Activated CD4-positive, alpha-beta T cell treated with anti-CD3 and anti-CD28 coated beads for 36 hours (primary cell): ENCODE measurements at regions of chr15 and their contacts with region 1.

Region 1: GRCh38 chr15:43510200-43511011 is 7.0 kb upstream of the MAP1A start:
- DNase-seq: peak; percentile 98
- ATAC-seq: peak; percentile 95
- H3K4me3 Mint-ChIP-seq: peak overlapping the region; percentile 91
- H3K27ac Mint-ChIP-seq: peak overlapping the region; percentile 90
- H3K4me1 Mint-ChIP-seq: peaks cover 32% of the 10 kb centered on the region
- H3K27me3 Mint-ChIP-seq: no peaks in the 10 kb centered on the region

Region 2: DNA sequence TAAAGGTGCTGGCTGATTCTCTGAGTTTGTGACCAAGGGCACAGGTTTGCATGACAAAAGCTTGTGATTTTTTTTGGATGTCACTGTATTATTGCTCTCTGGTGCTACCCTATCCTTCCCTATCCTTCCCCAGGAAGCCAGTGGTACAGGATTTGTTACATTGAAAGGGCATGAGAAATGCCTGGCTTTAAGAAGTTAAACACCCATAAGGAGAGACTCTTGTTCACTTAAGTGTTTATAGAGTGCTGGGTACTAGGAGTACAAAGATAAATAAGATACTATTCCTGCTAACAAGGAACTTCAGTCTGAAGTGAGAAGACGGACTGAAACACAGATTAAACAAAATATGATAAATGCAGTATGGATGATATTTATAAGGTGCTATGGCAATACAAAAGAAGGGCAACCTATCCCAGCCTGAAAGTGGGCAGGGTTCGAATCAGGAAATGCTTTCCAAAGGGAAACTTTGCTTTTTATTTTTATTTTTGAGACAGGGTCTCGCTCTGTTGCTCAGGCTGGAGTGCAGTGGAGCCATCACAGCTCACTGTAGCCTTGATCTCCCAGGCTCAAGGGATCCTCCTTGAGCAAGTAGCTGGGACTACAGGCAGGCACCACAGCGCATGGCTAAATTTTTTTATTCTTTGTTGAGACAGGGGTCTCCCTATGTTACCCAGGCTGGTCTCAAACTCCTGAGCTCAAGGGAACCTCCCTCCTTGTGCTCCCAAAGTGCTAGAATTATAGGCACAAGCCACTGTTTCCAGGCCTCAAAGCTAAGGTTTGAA is 191.2 kb before region 1 on chr15:
- CTCF ChIA-PET with region 1: no interaction called
- POLR2A ChIA-PET with region 1: no interaction called
- intact Hi-C with region 1: no loop called
- DNase-seq: no peak
- ATAC-seq: no peak
- H3K4me3 Mint-ChIP-seq: no peak overlapping the region
- H3K27ac Mint-ChIP-seq: no peak overlapping the region
- H3K4me1 Mint-ChIP-seq: no peaks in the 10 kb centered on the region
- H3K27me3 Mint-ChIP-seq: peaks cover 12% of the 10 kb centered on the region

Region 3: DNA sequence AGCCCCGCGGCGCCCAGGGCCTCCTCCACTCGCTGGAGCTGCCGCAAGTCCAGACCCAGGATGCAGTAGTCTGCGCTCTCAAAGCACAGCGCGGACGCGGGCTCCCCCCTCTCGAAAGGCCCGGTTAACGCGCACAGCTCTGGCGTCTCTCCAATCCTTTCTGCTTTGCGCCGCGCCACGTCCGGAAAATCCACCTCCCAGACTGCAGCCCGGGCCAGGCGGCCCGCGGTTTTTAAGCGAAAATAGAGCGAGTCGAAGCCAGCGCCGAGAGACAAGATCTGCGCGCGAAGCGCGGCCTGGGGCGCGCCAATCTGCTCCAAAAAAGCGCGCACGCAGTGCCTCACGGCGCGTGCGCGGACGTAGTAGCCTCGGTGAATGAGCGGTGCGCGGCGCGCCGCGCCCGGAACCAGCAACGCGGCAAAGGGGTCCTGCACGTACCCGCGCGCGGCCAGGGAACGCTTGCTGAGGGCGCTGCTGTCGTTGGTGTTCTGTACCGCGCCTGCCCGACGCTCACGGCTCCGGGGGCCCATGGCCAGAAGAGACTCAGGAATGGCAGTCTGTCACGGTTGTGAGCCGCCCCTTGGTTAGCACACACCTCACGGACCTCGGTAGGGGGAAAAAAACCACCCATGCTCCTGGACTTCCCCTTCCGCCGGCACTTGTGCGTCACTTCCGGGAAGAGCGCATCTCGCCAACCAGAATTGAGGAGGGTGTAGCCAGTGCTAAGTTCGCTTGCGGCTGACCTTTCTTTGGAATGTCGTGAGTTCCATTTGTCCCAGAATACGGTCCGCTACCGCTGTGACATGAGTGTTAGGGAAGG is 180.2 kb before region 1 on chr15 and contains the start of gene LCMT2:
- CTCF ChIA-PET with region 1: no interaction called
- POLR2A ChIA-PET with region 1: no interaction called
- intact Hi-C with region 1: loop called in 1 of 2 experiments (anchors 1 kb)
- DNase-seq: peak; percentile 93
- ATAC-seq: peak; percentile 91
- H3K4me3 Mint-ChIP-seq: peak within 1 kb of the TSS; percentile 91
- H3K27ac Mint-ChIP-seq: peak within 1 kb of the TSS; percentile 95
- H3K4me1 Mint-ChIP-seq: peaks cover 32% of the 10 kb centered on the region
- H3K27me3 Mint-ChIP-seq: no peaks in the 10 kb centered on the region
- total RNA-seq, gene LCMT2: 7.6 to 8.5 TPM

Region 4: GRCh38 chr15:43440721-43441281 is 69.6 kb before region 1 on chr15:
- CTCF ChIA-PET with region 1: interaction called, 21 read pairs
- POLR2A ChIA-PET with region 1: interaction called, 7 read pairs
- intact Hi-C with region 1: loop called (anchors 1 to 2 kb)
- DNase-seq: peak; percentile 64
- ATAC-seq: peak; percentile 95
- H3K4me3 Mint-ChIP-seq: no peak overlapping the region
- H3K27ac Mint-ChIP-seq: peak overlapping the region; percentile 91
- H3K4me1 Mint-ChIP-seq: peaks cover 7% of the 10 kb centered on the region
- H3K27me3 Mint-ChIP-seq: no peaks in the 10 kb centered on the region

Region 5: GRCh38 chr15:43492673-43493601 is 17.5 kb before region 1 on chr15 and contains the start of gene TP53BP1:
- CTCF ChIA-PET with region 1: interaction called, 11 read pairs
- POLR2A ChIA-PET with region 1: interaction called, 6 read pairs
- intact Hi-C with region 1: loop called (anchors 1 kb)
- DNase-seq: peak; percentile 98
- ATAC-seq: peak; percentile 100
- H3K4me3 Mint-ChIP-seq: peak within 1 kb of the TSS; percentile 81
- H3K27ac Mint-ChIP-seq: peak within 1 kb of the TSS; percentile 93
- H3K4me1 Mint-ChIP-seq: peaks cover 30% of the 10 kb centered on the region
- H3K27me3 Mint-ChIP-seq: no peaks in the 10 kb centered on the region
- total RNA-seq, gene TP53BP1: 22.4 to 23.9 TPM

Region 6: DNA sequence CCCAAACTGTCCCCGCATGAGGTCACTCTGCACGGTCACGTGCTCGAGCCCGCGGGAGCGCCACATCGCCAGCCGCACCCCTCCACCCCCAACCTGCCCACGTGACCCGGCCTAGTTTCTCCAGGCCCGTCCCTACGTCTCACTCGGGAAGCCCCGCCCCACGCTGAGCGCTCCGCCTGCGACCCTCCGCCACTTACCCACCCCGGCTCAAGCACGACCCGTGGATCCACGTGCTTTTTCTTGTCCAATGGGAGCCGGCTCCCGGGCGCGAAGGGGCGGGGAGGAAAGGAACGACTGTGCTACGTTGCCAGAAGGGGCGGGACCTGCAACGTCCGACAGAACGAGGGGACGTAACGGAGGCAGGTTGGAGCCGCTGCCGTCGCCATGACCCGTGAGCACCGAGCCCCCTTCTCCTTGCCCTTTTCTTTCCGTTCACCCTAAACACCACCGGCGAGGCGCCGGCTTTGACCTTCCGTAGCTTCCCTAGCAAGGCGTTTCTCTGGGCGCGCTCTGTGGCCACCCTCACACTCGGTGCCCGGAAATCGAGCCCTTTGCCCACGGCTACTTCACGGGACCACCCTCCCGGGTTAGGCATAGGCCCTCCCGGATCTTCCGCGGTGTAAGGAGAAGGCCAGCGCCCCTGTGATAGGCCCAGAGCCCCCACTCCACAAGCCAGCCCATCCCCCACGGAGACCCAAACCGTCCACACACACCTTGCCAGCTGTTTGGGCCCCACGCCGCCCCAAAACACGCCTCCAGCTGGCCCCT is 281.8 kb after region 1 on chr15 and contains the start of gene SERF2:
- CTCF ChIA-PET with region 1: no interaction called
- POLR2A ChIA-PET with region 1: no interaction called
- intact Hi-C with region 1: loop called in 1 of 2 experiments (anchors 1 kb)
- DNase-seq: peak; percentile 100
- ATAC-seq: peak; percentile 98
- H3K4me3 Mint-ChIP-seq: peak within 1 kb of the TSS; percentile 97
- H3K27ac Mint-ChIP-seq: peak within 1 kb of the TSS; percentile 97
- H3K4me1 Mint-ChIP-seq: peaks cover 35% of the 10 kb centered on the region
- H3K27me3 Mint-ChIP-seq: no peaks in the 10 kb centered on the region
- total RNA-seq, gene SERF2: 710 to 718 TPM

Region 7: GRCh38 chr15:44066316-44066740 is 555.9 kb after region 1 on chr15:
- CTCF ChIA-PET with region 1: no interaction called
- POLR2A ChIA-PET with region 1: no interaction called
- intact Hi-C with region 1: no loop called
- DNase-seq: peak; percentile 80
- ATAC-seq: peak; percentile 68
- H3K4me3 Mint-ChIP-seq: no peak overlapping the region
- H3K27ac Mint-ChIP-seq: no peak overlapping the region
- H3K4me1 Mint-ChIP-seq: peaks cover 4% of the 10 kb centered on the region
- H3K27me3 Mint-ChIP-seq: peaks cover 14% of the 10 kb centered on the region